ENCODE measurements at regions of chr11 and their contacts with region 1.

Region 1: DNA sequence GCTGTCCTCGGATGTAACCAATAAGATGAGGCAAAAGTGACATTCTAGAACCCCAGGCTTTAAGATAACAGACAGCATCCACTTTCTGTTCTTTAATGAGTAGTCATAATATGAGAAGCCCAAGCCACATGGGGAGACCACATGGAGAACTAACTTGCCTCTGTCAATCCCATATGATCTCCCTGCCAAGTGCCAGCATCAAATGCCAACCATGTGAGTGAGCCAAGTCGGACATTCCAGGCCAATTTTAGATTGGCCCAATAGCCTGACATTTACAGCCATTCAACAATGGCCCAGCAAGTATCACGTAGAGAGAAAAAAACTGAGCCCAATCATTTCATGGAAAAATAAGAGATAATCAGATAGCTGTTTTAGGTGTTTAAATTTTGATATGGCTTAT is 2048.3 kb upstream of the RAG2 start:
- DNase-seq: no peak
- ATAC-seq: no peak
- H3K4me3 ChIP-seq: no peak overlapping the region
- H3K27ac ChIP-seq: no peak overlapping the region
- H3K4me1 ChIP-seq: no peaks in the 10 kb centered on the region
- H3K27me3 ChIP-seq: no peaks in the 10 kb centered on the region
- CTCF ChIP-seq: no peak

Region 2: DNA sequence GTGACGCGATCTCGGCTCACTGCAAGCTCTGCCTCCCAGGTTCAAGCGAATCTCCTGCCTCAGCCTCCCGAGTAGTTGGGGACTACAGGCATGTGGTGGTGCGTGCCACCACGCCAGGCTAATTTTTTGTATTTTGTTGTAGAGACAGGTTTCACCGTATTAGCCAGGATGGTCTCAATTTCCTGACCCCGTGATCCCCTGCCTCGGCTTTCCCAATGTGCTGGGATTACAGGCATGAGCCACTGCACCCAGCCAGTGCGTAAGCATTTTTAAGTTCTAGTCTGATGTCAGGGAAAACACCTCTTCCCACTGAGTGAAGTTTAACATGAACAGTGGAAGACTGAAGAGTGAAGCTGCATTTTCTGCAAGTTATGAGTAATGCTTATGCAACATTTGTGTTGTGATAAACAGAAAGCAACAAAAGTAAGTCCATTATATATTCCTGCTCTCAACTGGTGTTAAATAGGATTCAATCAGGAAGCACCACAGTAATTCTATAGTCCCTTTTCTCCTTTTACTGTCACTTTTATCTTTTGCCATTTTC is 828.6 kb before region 1 on chr11:
- CTCF ChIA-PET with region 1: no interaction called
- POLR2A ChIA-PET with region 1: no interaction called
- in situ Hi-C with region 1: no loop called
- intact Hi-C with region 1: loop called (anchors 5 kb)
- DNase-seq: no peak
- ATAC-seq: no peak
- H3K4me3 ChIP-seq: no peak overlapping the region
- H3K27ac ChIP-seq: no peak overlapping the region
- H3K4me1 ChIP-seq: no peaks in the 10 kb centered on the region
- H3K27me3 ChIP-seq: no peaks in the 10 kb centered on the region
- CTCF ChIP-seq: no peak

Region 3: GRCh38 chr11:38835984-38836383 is 189.6 kb after region 1 on chr11:
- CTCF ChIA-PET with region 1: no interaction called
- POLR2A ChIA-PET with region 1: no interaction called
- in situ Hi-C with region 1: no loop called
- intact Hi-C with region 1: no loop called
- DNase-seq: no peak
- ATAC-seq: no peak
- H3K4me3 ChIP-seq: no peak overlapping the region
- H3K27ac ChIP-seq: no peak overlapping the region
- H3K4me1 ChIP-seq: no peaks in the 10 kb centered on the region
- H3K27me3 ChIP-seq: no peaks in the 10 kb centered on the region
- CTCF ChIP-seq: no peak

Measured in Panc1 (cell line).